ENCODE measurements at regions of chr22 and their contacts with region 1.

Region 1: DNA sequence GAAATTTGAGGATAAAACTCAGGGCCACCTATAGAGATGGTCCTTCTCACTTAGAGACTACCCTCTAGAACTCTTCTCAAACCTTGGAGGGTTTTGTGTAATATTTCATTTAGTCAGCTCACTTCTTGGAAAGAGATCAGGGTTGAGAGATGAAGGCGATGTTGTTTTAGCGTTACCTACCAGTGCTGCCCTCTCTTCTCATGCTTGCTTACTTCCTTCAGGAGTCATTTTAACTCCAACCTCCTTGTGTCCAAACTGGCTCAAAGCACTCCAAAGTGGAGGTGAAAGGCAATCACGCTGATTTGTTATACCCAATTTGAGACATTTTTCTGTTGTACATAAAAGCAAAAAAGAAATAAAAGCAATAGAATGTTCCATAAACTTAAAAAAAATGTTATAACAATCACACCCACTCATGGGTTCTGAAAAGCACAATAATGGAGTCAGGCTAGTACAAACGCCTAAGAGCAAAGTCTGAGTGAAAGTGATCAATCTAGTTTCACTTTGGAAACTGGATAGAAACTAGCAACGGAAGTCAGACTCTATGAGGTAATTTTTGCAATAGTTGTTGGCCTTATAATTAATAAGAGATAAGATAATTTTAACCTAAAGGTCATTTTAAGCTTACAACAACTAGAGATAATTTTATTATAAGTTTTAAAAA is 117.1 kb downstream of the MRTFA start:
- DNase-seq: no peak
- H3K4me3 Mint-ChIP-seq: peak overlapping the region; percentile 51
- H3K27ac Mint-ChIP-seq: peak overlapping the region; percentile 89
- H3K4me1 Mint-ChIP-seq: peaks cover 31% of the 10 kb centered on the region
- H3K27me3 Mint-ChIP-seq: no peaks in the 10 kb centered on the region

Region 2: GRCh38 chr22:40499187-40499753 is 20.1 kb before region 1 on chr22:
- intact Hi-C with region 1: loop called (anchors 2 kb)
- DNase-seq: no peak
- H3K4me3 Mint-ChIP-seq: no peak overlapping the region
- H3K27ac Mint-ChIP-seq: peak overlapping the region; percentile 51
- H3K4me1 Mint-ChIP-seq: peaks cover 23% of the 10 kb centered on the region
- H3K27me3 Mint-ChIP-seq: no peaks in the 10 kb centered on the region

Measured in activated T-helper 2 cell treated with anti-CD3 and anti-CD28 coated beads, Interferon-gamma antibody, Interleukin-2, Interleukin-4, amounts not matched to agents 10 μg/mL and 5 μg/mL and 100 μg/mL, durations not matched to agents 14 hours and 24 hours and 36 hours (primary cell).